GM12878 (cell line): ENCODE measurements at regions of chr7 and their contacts with region 1.

Region 1: GRCh38 chr7:117219485-117219884 is 103.4 kb downstream of the WNT2 start:
- DNase-seq: no peak
- ATAC-seq: peak; percentile 75
- H3K4me3 ChIP-seq: no peak overlapping the region
- H3K27ac ChIP-seq: no peak overlapping the region; the same call in 1 of the 2 replicates
- H3K4me1 ChIP-seq: no peaks in the 10 kb centered on the region; the same call in 1 of the 2 replicates
- H3K27me3 ChIP-seq: no peaks in the 10 kb centered on the region
- CTCF ChIP-seq: no peak
- EP300 ChIP-seq: no peak
- POLR2A ChIP-seq: no peak
- RAD21 ChIP-seq: no peak

Region 2: DNA sequence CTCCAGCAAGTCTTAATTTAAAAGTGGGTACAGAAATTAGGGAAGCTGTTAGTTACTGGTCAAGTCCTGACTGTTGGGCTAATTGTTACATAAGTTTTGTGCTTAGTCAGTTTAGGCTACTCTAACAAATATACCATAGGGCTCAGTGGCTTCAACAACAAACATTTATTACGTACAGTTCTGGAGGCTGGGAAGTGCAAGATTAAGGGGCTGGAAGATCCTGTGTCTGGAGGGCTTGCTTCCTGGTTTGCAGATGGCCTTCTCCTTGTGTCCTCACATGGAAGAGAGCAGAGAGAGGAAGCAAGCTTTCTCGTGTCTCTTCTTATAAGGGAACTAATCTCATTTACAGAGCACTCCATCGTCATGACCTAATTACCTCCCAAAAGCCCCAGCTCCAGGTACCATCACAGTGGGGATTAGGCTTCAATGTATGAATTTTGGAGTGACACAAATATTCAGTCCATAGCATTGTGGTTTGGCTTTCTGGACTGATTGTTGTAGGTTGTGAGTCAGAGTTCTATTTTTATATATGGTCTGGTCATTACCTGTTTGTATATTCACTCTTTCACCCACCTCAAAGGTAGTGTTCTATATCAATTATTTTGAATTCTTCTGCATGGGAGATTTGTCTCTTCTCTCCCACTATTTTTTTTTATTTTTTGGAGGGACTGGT is 249.1 kb before region 1 on chr7:
- CTCF ChIA-PET with region 1: no interaction called
- POLR2A ChIA-PET with region 1: no interaction called
- RAD21 ChIA-PET with region 1: no interaction called
- SMC1A ChIA-PET with region 1: no interaction called
- in situ Hi-C with region 1: no loop called
- intact Hi-C with region 1: no loop called
- DNase-seq: no peak
- ATAC-seq: peak; percentile 87
- H3K4me3 ChIP-seq: peak overlapping the region; percentile 20; the same call in 1 of the 2 replicates
- H3K27ac ChIP-seq: peak overlapping the region; percentile 57
- H3K4me1 ChIP-seq: peaks cover 21% of the 10 kb centered on the region
- H3K27me3 ChIP-seq: no peaks in the 10 kb centered on the region
- CTCF ChIP-seq: no peak
- EP300 ChIP-seq: peak in 1 of 2 experiments; percentile 24; a peak in 1 of 4 replicates
- POLR2A ChIP-seq: no peak
- RAD21 ChIP-seq: no peak

Region 3: GRCh38 chr7:117119192-117119924 is 100.1 kb before region 1 on chr7:
- CTCF ChIA-PET with region 1: no interaction called
- POLR2A ChIA-PET with region 1: no interaction called
- RAD21 ChIA-PET with region 1: no interaction called
- SMC1A ChIA-PET with region 1: no interaction called
- in situ Hi-C with region 1: no loop called
- intact Hi-C with region 1: no loop called
- DNase-seq: peak; percentile 33
- ATAC-seq: peak; percentile 75
- H3K4me3 ChIP-seq: no peak overlapping the region
- H3K27ac ChIP-seq: no peak overlapping the region
- H3K4me1 ChIP-seq: peaks cover 3% of the 10 kb centered on the region
- H3K27me3 ChIP-seq: no peaks in the 10 kb centered on the region
- CTCF ChIP-seq: peak; percentile 75 to 87 (median 83)
- EP300 ChIP-seq: no peak
- POLR2A ChIP-seq: no peak
- RAD21 ChIP-seq: peak; percentile 97

Region 4: GRCh38 chr7:117230276-117231046 is 11.0 kb after region 1 on chr7:
- CTCF ChIA-PET with region 1: interaction called, 7 read pairs
- POLR2A ChIA-PET with region 1: interaction called, 5 read pairs
- RAD21 ChIA-PET with region 1: interaction called, 25 read pairs
- SMC1A ChIA-PET with region 1: interaction called, 10 read pairs
- in situ Hi-C with region 1: no loop called
- intact Hi-C with region 1: no loop called
- DNase-seq: peak; percentile 66
- ATAC-seq: peak; percentile 92
- H3K4me3 ChIP-seq: no peak overlapping the region
- H3K27ac ChIP-seq: peak overlapping the region; percentile 74
- H3K4me1 ChIP-seq: peaks cover 12% of the 10 kb centered on the region
- H3K27me3 ChIP-seq: no peaks in the 10 kb centered on the region
- CTCF ChIP-seq: no peak
- EP300 ChIP-seq: peak; percentile 25 to 64; a peak in 1 of 4 replicates
- POLR2A ChIP-seq: no peak
- RAD21 ChIP-seq: no peak

Region 5: DNA sequence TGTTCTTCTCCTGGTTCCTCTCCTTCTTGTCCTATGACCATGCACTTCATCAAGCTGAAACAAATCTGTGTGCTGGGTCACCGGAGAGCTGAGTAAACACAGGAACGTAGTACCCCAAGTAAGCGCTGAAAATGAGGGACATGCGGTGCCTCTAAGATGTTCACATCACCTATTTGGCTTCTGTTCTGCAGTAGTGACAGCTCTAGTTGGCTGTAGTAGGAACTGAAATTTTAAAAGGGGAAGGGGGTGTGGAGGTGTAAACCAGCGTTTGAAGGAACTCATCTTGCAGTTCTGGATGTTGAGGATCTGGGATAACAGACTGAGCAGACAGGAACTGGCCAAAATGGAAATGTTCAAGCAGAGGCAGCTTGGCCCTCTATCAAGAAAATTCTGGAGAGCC is 18.2 kb after region 1 on chr7:
- CTCF ChIA-PET with region 1: interaction called, 3 read pairs
- POLR2A ChIA-PET with region 1: no interaction called
- RAD21 ChIA-PET with region 1: no interaction called
- SMC1A ChIA-PET with region 1: interaction called, 6 read pairs
- in situ Hi-C with region 1: no loop called
- intact Hi-C with region 1: loop called (anchors 2 kb)
- DNase-seq: peak; percentile 28
- ATAC-seq: peak; percentile 83
- H3K4me3 ChIP-seq: no peak overlapping the region
- H3K27ac ChIP-seq: no peak overlapping the region
- H3K4me1 ChIP-seq: peaks cover 12% of the 10 kb centered on the region
- H3K27me3 ChIP-seq: no peaks in the 10 kb centered on the region
- CTCF ChIP-seq: no peak
- EP300 ChIP-seq: 0 out of 4 replicates have a peak, but pooled peaks of 1 of the 2 experiments have one; percentile 19
- POLR2A ChIP-seq: no peak
- RAD21 ChIP-seq: no peak